ENCODE measurements at regions of chr14 and their contacts with region 1.

Region 1: DNA sequence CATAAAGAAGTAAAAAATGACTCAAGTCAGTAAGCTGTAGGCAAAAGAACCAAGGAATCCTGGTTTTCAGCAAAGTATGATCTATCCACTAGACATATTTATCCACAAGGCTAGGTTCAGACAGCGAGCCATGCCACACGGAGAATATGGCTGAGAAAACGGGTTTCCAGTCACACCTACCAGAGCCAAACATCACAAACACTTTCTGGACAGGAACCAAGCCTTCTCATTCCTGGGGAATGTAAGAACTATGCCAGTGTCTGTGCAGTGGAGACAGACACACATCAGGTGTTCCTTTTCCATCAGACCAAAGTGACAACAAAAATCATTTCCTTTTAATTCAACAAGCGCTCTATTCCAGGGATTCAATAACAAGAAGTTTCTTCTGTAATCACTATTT is 41.1 kb downstream of the AREL1 start:
- DNase-seq: peak in 1 of 2 experiments; percentile 80
- H3K4me3 ChIP-seq: no peak overlapping the region
- H3K27ac ChIP-seq: no peak overlapping the region
- H3K4me1 ChIP-seq: no peaks in the 10 kb centered on the region
- H3K27me3 ChIP-seq: no peaks in the 10 kb centered on the region
- CTCF ChIP-seq: no peak

Region 2: GRCh38 chr14:74501135-74501614 is 170.6 kb before region 1 on chr14:
- CTCF ChIA-PET with region 1: no interaction called
- POLR2A ChIA-PET with region 1: interaction called, 17 read pairs
- intact Hi-C with region 1: no loop called
- DNase-seq: peak in 1 of 2 experiments; percentile 42
- H3K4me3 ChIP-seq: no peak overlapping the region
- H3K27ac ChIP-seq: no peak overlapping the region
- H3K4me1 ChIP-seq: peaks cover 11% of the 10 kb centered on the region
- H3K27me3 ChIP-seq: no peaks in the 10 kb centered on the region
- CTCF ChIP-seq: peak; percentile 47; the same call in 1 of the 2 replicates

Region 3: GRCh38 chr14:74618078-74618952 is 53.5 kb before region 1 on chr14:
- CTCF ChIA-PET with region 1: interaction called, 6 read pairs
- POLR2A ChIA-PET with region 1: interaction called, 7 read pairs
- intact Hi-C with region 1: loop called (anchors 1 kb)
- DNase-seq: peak; percentile 67 to 100
- H3K4me3 ChIP-seq: no peak overlapping the region
- H3K27ac ChIP-seq: peak overlapping the region; percentile 84
- H3K4me1 ChIP-seq: peaks cover 99% of the 10 kb centered on the region
- H3K27me3 ChIP-seq: no peaks in the 10 kb centered on the region
- CTCF ChIP-seq: no peak

Region 4: DNA sequence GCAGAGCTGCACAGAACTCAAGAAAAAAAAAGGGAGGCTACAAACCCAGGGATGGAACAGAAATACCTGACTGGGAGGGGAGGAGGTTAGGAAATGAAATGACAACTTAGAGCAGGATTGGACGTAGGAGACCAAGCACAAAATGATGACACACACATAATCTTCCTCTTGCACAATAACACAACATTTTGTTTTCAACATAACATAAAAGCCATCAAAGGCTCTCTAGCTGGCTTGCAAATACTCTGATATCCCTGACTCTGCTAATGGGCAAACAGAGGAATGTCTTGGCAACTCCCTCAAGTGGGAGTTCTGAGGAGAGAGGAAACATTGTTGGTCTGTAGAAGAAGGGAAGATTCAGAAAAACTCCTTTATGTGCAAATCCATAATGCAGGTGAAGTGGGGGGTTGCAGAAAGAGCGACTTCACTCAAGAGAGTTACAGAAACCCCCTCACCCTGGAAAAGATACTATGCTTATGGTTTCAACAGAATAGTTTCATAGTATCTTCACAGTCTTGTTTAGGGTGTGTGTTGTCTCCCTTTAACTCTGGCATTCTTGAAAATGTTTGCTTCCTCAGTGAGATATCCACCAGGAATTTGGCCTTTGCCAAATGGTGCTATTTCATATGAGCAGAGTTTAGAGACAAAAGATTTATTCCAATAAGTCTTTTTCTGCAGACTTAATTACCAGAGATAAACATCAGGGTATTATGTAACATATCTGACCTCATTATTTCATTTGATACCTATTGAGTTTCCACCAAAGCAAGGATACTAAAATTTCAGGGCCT is 16.0 kb before region 1 on chr14:
- CTCF ChIA-PET with region 1: no interaction called
- POLR2A ChIA-PET with region 1: interaction called, 16 read pairs
- intact Hi-C with region 1: loop called (anchors 1 kb)
- DNase-seq: peak; percentile 58 to 96
- H3K4me3 ChIP-seq: no peak overlapping the region
- H3K27ac ChIP-seq: peak overlapping the region; percentile 78
- H3K4me1 ChIP-seq: peaks cover 59% of the 10 kb centered on the region
- H3K27me3 ChIP-seq: no peaks in the 10 kb centered on the region
- CTCF ChIP-seq: no peak; the same call in 1 of the 2 replicates

Region 5: GRCh38 chr14:74804219-74804826 is 132.5 kb after region 1 on chr14:
- CTCF ChIA-PET with region 1: no interaction called
- POLR2A ChIA-PET with region 1: no interaction called
- intact Hi-C with region 1: loop called (anchors 5 kb)
- DNase-seq: peak; percentile 59 to 65
- H3K4me3 ChIP-seq: no peak overlapping the region
- H3K27ac ChIP-seq: no peak overlapping the region
- H3K4me1 ChIP-seq: no peaks in the 10 kb centered on the region
- H3K27me3 ChIP-seq: no peaks in the 10 kb centered on the region
- CTCF ChIP-seq: peak; percentile 89